ENCODE measurements at regions of chr5 and their contacts with region 1.

Region 1: DNA sequence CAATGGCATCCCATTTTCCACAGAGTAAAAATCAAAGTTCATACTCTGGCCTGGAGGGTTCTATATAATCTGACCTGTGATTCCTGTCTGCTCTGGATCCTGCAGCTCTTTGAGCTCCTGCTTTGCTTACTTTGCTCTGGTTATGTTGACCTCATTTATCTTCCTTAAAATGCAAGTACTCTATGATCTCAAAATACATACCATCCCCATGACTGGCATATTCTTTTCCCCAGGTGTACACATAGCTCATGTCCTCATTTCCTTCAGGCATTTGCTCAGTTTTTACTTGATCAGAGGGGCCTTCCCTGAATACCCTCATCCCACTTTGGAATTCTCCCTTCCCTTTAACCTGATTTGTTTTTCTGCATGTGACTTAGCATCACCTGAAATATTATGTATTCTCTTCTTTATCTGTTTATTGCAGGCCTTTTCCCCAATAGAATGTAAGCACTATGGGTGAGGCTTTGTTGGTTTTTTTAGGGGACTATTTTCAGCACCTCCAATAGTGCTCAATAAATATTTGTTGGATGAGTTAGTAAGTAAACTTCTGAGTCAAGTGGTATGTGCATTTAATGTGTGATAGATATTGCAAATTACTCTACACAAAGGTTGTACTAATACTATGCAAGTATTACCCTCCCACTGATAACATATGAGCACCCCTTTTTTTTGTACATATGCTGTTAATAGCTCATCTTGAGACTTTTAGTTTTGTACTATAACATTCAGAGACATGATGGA is 211.5 kb downstream of the NMUR2 start:
- DNase-seq: no peak
- ATAC-seq: no peak
- H3K4me3 ChIP-seq: no peak overlapping the region
- H3K27ac ChIP-seq: no peak overlapping the region
- H3K4me1 ChIP-seq: peaks cover 0 to 2% (median 0%) of the 10 kb centered on the region in 12 donors
- H3K27me3 ChIP-seq: no peaks in the 10 kb centered on the region
- CTCF ChIP-seq: no peak
- POLR2A ChIP-seq: no peak

Region 2: GRCh38 chr5:152246407-152246806 is 52.9 kb after region 1 on chr5:
- intact Hi-C with region 1: loop called in 1 of 10 experiments (anchors 5 kb)
- DNase-seq: peak in 3 of 5 donors; percentile 30 to 38 (median 32)
- ATAC-seq: no peak
- H3K4me3 ChIP-seq: no peak overlapping the region
- H3K27ac ChIP-seq: no peak overlapping the region
- H3K4me1 ChIP-seq: no peaks in the 10 kb centered on the region
- H3K27me3 ChIP-seq: no peaks in the 10 kb centered on the region
- CTCF ChIP-seq: no peak
- POLR2A ChIP-seq: no peak

Region 3: GRCh38 chr5:152427721-152428120 is 234.2 kb after region 1 on chr5:
- intact Hi-C with region 1: no loop called
- DNase-seq: no peak
- ATAC-seq: no peak
- H3K4me3 ChIP-seq: no peak overlapping the region
- H3K27ac ChIP-seq: no peak overlapping the region
- H3K4me1 ChIP-seq: no peaks in the 10 kb centered on the region
- H3K27me3 ChIP-seq: no peaks in the 10 kb centered on the region
- CTCF ChIP-seq: no peak
- POLR2A ChIP-seq: no peak